Naive thymus-derived CD4-positive, alpha-beta T cell (primary cell): ENCODE measurements at regions of chr5 and their contacts with region 1.

Region 1: GRCh38 chr5:180718810-180719453 is 20.9 kb downstream of the OR2Y1 start:
- DNase-seq: peak in 7 of 9 donors; percentile 32 to 71 (median 63)
- ATAC-seq: no peak
- H3K4me3 ChIP-seq: no peak overlapping the region
- H3K4me3 Mint-ChIP-seq: no peak overlapping the region
- H3K27ac ChIP-seq: no peak overlapping the region
- H3K27ac Mint-ChIP-seq: peak overlapping the region in 3 of 9 donors; percentile 1 to 54 (median 14)
- H3K4me1 ChIP-seq: peaks cover 0 to 16% of the 10 kb centered on the region in 2 donors
- H3K4me1 Mint-ChIP-seq: peaks cover 6 to 21% (median 17%) of the 10 kb centered on the region in 7 donors
- H3K27me3 ChIP-seq: no peaks in the 10 kb centered on the region
- H3K27me3 Mint-ChIP-seq: peaks cover 0 to 15% (median 0%) of the 10 kb centered on the region in 5 donors

Region 2: DNA sequence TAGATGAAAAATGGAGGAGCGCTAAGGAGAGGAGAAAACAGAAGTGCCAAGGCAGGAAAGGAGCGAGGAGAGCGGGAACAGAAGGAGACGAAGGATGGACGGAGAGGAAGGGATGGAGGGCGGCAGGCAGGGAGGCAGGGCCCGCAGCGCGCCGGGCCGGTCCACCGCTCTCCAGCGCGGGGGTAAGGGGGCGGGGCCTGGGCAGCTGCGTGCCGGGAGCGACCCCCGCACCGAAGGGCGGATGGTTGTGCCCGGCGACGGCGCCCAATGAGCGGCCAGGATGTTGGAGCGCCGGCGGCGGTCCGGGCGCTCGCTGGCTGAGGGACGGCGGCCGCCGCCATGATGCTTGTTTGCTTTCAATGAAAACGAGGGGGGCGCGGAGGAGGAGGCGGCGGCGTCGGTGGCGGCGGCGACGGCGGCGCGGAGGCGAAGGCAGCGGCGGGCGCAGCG is 224.8 kb before region 1 on chr5 and contains the start of gene CNOT6:
- CTCF ChIA-PET with region 1: no interaction called
- POLR2A ChIA-PET with region 1: no interaction called
- intact Hi-C with region 1: loop called in 1 of 2 experiments (anchors 1 kb)
- DNase-seq: peak; percentile 91 to 98 (median 95)
- ATAC-seq: peak; percentile 98
- H3K4me3 ChIP-seq: peak within 1 kb of the TSS; percentile 83
- H3K4me3 Mint-ChIP-seq: peak within 1 kb of the TSS; percentile 85 to 99 (median 96)
- H3K27ac ChIP-seq: peak within 1 kb of the TSS; percentile 98
- H3K27ac Mint-ChIP-seq: peak within 1 kb of the TSS; percentile 84 to 98 (median 95)
- H3K4me1 ChIP-seq: peaks cover 10 to 27% of the 10 kb centered on the region in 2 donors
- H3K4me1 Mint-ChIP-seq: peaks cover 29 to 42% (median 35%) of the 10 kb centered on the region in 7 donors
- H3K27me3 ChIP-seq: no peaks in the 10 kb centered on the region
- H3K27me3 Mint-ChIP-seq: no peaks in the 10 kb centered on the region
- total RNA-seq, gene CNOT6: 22.8 to 41.9 (median 30.0) TPM

Region 3: DNA sequence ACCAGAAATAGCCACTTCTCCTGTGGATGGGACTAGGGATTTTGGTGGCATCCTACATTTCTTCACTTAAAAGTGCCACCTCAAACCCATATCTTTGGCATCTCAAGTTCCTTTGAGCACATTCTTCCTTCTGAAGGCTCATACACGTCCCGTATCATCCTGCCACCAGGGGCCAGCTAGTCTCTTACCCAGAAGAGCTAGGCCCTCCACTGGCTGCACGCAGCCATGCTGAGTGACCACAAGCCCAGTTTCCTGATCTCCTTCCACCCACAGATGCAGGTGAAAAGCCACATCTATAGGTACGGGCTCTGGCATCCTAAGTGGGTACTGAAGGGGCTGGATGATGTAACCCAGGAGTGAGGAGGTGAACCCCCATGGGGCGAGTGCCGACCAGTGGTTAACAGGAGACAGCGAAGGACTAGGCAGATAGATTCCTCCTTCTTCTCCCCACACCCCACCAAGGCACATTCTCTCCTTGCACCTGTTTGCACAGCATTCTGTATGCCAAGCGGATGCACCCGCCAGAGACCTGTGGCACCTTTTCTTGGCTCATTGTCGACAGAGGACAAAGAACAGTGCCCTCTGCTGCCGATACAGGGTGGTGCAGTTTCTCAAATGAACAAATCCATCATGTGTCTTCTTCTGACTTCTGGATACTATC is 113.2 kb before region 1 on chr5:
- CTCF ChIA-PET with region 1: no interaction called
- POLR2A ChIA-PET with region 1: no interaction called
- intact Hi-C with region 1: loop called in 1 of 2 experiments (anchors 1 kb)
- DNase-seq: peak in 8 of 9 donors; percentile 23 to 62 (median 52)
- ATAC-seq: peak; percentile 65
- H3K4me3 ChIP-seq: no peak overlapping the region
- H3K4me3 Mint-ChIP-seq: no peak overlapping the region
- H3K27ac ChIP-seq: no peak overlapping the region
- H3K27ac Mint-ChIP-seq: no peak overlapping the region
- H3K4me1 ChIP-seq: no peaks in the 10 kb centered on the region
- H3K4me1 Mint-ChIP-seq: peaks cover 0 to 10% (median 0%) of the 10 kb centered on the region in 7 donors
- H3K27me3 ChIP-seq: no peaks in the 10 kb centered on the region
- H3K27me3 Mint-ChIP-seq: no peaks in the 10 kb centered on the region

Region 4: GRCh38 chr5:180648641-180649296 is 70.2 kb before region 1 on chr5:
- CTCF ChIA-PET with region 1: interaction called, 7 read pairs
- POLR2A ChIA-PET with region 1: no interaction called
- intact Hi-C with region 1: loop called in 1 of 2 experiments (anchors 2 kb)
- DNase-seq: peak in 1 of 9 donors; percentile 28
- ATAC-seq: peak; percentile 15
- H3K4me3 ChIP-seq: peak overlapping the region; percentile 20
- H3K4me3 Mint-ChIP-seq: peak overlapping the region; percentile 61 to 89 (median 78)
- H3K27ac ChIP-seq: no peak overlapping the region
- H3K27ac Mint-ChIP-seq: peak overlapping the region in 1 of 9 donors; percentile 47
- H3K4me1 ChIP-seq: no peaks in the 10 kb centered on the region
- H3K4me1 Mint-ChIP-seq: peaks cover 9 to 18% (median 12%) of the 10 kb centered on the region in 7 donors
- H3K27me3 ChIP-seq: peaks cover 0 to 4% of the 10 kb centered on the region in 2 donors
- H3K27me3 Mint-ChIP-seq: peaks cover 16 to 47% (median 31%) of the 10 kb centered on the region in 5 donors

Region 5: DNA sequence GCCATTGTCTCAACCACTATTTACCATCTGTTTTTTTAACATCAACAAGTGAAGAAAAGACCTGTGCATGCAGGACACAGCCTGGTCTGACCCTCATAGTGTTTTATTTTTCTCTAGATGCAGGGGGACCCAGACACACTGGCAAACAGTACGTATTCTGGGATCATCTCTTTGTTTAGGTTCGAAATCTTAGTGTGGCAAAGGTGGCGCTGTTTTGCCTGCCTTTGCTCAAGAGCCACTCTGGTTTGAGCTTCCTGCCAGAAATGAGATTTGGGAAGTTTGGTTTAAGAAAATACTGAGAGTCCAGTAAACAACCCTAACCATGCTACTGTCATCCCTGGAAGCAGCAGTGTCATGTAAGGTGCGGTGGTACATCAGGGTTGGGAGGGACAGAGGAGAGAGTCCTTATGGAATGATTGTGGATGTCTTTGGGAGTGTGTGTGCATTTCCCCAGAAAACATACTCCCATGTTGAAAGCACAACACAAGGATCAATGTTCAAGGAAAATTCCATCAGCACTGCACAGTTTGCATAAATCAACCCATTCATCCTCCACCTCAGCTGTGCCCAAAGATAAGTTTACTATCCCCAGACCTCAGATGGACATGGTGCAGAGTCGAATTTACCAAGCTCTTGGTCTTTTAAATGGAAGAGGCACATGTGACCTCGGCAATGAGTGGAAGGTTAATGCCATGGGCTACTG is 35.6 kb before region 1 on chr5:
- CTCF ChIA-PET with region 1: interaction called, 43 read pairs
- POLR2A ChIA-PET with region 1: interaction called, 15 read pairs
- intact Hi-C with region 1: loop called (anchors 1 to 2 kb)
- DNase-seq: peak in 1 of 9 donors; percentile 23
- ATAC-seq: no peak
- H3K4me3 ChIP-seq: no peak overlapping the region
- H3K4me3 Mint-ChIP-seq: peak overlapping the region in 9 of 10 donors; percentile 36 to 77 (median 65)
- H3K27ac ChIP-seq: peak overlapping the region; percentile 46
- H3K27ac Mint-ChIP-seq: peak overlapping the region in 8 of 9 donors; percentile 81 to 98 (median 92)
- H3K4me1 ChIP-seq: peaks cover 5 to 48% of the 10 kb centered on the region in 2 donors
- H3K4me1 Mint-ChIP-seq: peaks cover 4 to 59% (median 46%) of the 10 kb centered on the region in 7 donors
- H3K27me3 ChIP-seq: no peaks in the 10 kb centered on the region
- H3K27me3 Mint-ChIP-seq: peaks cover 0 to 2% (median 0%) of the 10 kb centered on the region in 5 donors

Region 6: GRCh38 chr5:180696116-180696515 is 22.8 kb before region 1 on chr5:
- CTCF ChIA-PET with region 1: interaction called, 12 read pairs
- POLR2A ChIA-PET with region 1: interaction called, 6 read pairs
- intact Hi-C with region 1: no loop called
- DNase-seq: no peak
- ATAC-seq: no peak
- H3K4me3 ChIP-seq: no peak overlapping the region
- H3K4me3 Mint-ChIP-seq: no peak overlapping the region
- H3K27ac ChIP-seq: no peak overlapping the region
- H3K27ac Mint-ChIP-seq: no peak overlapping the region
- H3K4me1 ChIP-seq: peaks cover 0 to 22% of the 10 kb centered on the region in 2 donors
- H3K4me1 Mint-ChIP-seq: peaks cover 0 to 34% (median 24%) of the 10 kb centered on the region in 7 donors
- H3K27me3 ChIP-seq: no peaks in the 10 kb centered on the region
- H3K27me3 Mint-ChIP-seq: peaks cover 0 to 18% (median 0%) of the 10 kb centered on the region in 5 donors